ENCODE measurements at regions of chr6 and their contacts with region 1.

Region 1: GRCh38 chr6:99868074-99868702 is 125.8 kb downstream of the MCHR2 start:
- DNase-seq: peak; percentile 31 to 87
- H3K4me3 ChIP-seq: peak overlapping the region in 1 of 4 experiments; percentile 47; a peak in 2 of 8 replicates
- H3K27ac ChIP-seq: no peak overlapping the region
- H3K4me1 ChIP-seq: no peaks in the 10 kb centered on the region
- H3K27me3 ChIP-seq: no peaks in the 10 kb centered on the region
- CTCF ChIP-seq: peak; percentile 81 to 90 (median 82)
- EP300 ChIP-seq: no peak
- POLR2A ChIP-seq: no peak
- RAD21 ChIP-seq: peak; percentile 90

Region 2: GRCh38 chr6:99852031-99852430 is 16.2 kb before region 1 on chr6:
- CTCF ChIA-PET with region 1: interaction called, 11 read pairs
- POLR2A ChIA-PET with region 1: no interaction called
- DNase-seq: no peak
- H3K4me3 ChIP-seq: no peak overlapping the region
- H3K27ac ChIP-seq: no peak overlapping the region
- H3K4me1 ChIP-seq: no peaks in the 10 kb centered on the region
- H3K27me3 ChIP-seq: peaks cover 0 to 1% (median 0%) of the 10 kb centered on the region in 4 experiments; a peak in 2 of 7 replicates
- CTCF ChIP-seq: no peak
- EP300 ChIP-seq: no peak
- POLR2A ChIP-seq: no peak
- RAD21 ChIP-seq: no peak

Region 3: DNA sequence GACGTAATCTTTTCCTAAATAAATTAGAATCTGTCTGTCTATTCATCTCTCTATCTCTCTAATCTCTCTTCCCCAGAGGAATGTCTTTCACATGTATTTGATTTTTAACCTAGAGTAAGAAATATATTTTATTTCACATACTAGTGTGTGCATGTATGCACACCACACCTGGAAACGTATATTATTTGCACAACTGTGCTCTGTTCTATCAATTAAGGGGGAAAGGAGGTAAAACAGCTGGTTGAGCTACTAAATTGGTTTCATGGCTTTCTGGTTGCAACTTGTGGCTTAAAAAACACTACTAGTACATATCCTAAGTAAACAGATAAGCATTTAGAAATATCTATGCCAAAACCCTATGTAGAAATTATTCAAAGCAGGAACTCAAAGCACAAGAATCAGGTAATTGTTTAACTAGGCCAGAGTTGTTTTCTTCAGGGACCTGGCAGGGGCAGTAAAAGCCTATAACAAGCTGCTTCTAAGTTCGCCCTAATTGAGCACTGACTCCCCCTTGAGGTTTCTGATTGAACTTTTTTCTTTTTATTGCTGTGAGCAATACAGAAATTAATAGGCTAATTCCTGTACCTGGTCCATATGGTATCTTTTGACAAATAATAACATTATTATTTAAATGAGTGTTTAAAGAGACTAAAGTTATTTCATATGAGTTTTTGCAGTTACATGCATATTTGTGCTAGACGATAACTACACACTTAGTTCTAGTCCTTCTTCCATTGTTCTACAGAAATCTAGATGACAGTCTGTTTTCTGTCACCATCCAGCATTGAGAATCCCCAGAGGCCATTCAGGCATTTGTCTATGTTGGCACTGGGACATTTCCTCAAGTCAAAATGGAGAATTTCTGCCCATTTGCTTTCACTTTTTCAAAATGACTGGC is 37.3 kb after region 1 on chr6:
- CTCF ChIA-PET with region 1: interaction called, 72 read pairs
- POLR2A ChIA-PET with region 1: no interaction called
- DNase-seq: peak in 1 of 2 experiments; percentile 5
- H3K4me3 ChIP-seq: no peak overlapping the region
- H3K27ac ChIP-seq: no peak overlapping the region
- H3K4me1 ChIP-seq: no peaks in the 10 kb centered on the region
- H3K27me3 ChIP-seq: no peaks in the 10 kb centered on the region
- CTCF ChIP-seq: peak in 2 of 3 experiments; percentile 71 to 98; a peak in 3 of 4 replicates
- EP300 ChIP-seq: no peak
- POLR2A ChIP-seq: no peak
- RAD21 ChIP-seq: peak; percentile 78 to 80

Region 4: GRCh38 chr6:100001915-100002388 is 133.8 kb after region 1 on chr6:
- CTCF ChIA-PET with region 1: interaction called, 40 read pairs
- POLR2A ChIA-PET with region 1: no interaction called
- DNase-seq: no peak
- H3K4me3 ChIP-seq: no peak overlapping the region
- H3K27ac ChIP-seq: no peak overlapping the region
- H3K4me1 ChIP-seq: no peaks in the 10 kb centered on the region
- H3K27me3 ChIP-seq: no peaks in the 10 kb centered on the region
- CTCF ChIP-seq: peak; percentile 75 to 94 (median 84)
- EP300 ChIP-seq: no peak
- POLR2A ChIP-seq: no peak
- RAD21 ChIP-seq: peak; percentile 86 to 88

Region 5: DNA sequence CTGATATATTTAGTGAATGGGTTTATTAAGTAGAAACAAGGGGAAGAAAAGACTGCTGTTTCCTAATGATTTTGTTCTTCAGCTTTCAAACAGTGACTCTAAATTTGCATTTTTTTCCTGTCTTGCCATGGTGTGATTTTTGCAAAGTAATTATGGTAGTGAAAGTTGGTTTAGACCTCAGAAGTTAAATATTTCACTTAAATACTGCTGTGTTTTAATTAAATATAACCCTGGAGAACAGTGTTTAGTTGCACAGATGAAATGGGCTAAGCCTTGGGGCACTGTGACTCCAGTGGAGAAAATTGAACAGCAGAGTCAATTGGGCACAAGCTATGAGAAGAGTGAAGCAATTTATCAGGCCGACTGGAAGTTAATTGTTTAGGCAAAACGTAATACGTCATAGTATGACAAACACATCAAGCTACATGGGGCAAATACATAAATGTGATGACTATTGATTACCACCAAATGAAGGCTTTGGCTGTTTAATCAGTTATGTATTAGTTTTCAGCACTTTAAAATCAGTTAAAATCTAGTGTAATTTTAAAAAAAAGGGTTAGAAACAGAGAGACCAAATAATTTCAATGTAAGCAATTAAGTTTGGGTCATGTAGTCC is 237.1 kb after region 1 on chr6:
- CTCF ChIA-PET with region 1: interaction called, 44 read pairs
- POLR2A ChIA-PET with region 1: no interaction called
- DNase-seq: no peak
- H3K4me3 ChIP-seq: no peak overlapping the region
- H3K27ac ChIP-seq: no peak overlapping the region
- H3K4me1 ChIP-seq: no peaks in the 10 kb centered on the region
- H3K27me3 ChIP-seq: no peaks in the 10 kb centered on the region
- CTCF ChIP-seq: no peak
- EP300 ChIP-seq: no peak
- POLR2A ChIP-seq: no peak
- RAD21 ChIP-seq: no peak